Heart right ventricle (tissue), 16 donors: ENCODE measurements at regions of chr2 and their contacts with region 1.

Region 1: DNA sequence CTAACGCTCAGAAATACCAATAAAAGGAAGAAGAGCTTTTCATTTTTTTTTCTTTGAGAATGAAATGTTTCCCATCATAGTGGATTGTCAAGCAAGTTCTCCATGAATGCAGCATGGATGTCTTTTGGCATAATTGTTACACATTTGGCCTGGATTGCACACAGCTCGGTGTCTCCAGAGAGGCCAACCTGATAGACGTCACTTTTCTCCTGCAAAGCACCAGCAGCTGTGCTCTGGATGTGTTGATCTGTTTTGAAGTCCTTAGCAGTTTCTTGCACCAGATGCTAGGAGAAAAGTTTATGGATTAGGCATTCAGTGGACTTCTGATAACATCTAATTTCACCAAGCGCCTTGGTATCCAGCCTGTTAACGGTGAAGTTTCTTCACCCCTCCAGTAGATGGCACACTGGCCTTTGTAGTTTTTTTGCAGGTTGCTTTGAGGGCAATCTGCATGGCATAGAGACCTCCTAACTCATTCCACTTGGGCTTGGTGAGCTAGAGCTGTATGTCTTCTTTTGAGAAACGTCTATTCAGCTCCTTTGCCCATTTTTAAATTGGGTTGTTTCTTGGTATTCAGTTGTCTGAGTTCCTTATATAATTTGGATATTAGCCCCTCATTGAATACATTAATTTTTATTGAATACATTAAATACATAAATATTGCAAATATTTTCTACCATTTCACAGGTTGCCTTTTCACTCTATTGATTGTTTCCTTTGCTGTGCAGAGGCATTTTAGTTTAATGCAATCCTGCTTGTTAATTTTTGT is 59.7 kb downstream of the PTH2R start:
- DNase-seq: no peak
- ATAC-seq: no peak
- H3K4me3 ChIP-seq: no peak overlapping the region
- H3K27ac ChIP-seq: no peak overlapping the region
- H3K4me1 ChIP-seq: no peaks in the 10 kb centered on the region
- H3K27me3 ChIP-seq: peaks cover 0 to 4% (median 0%) of the 10 kb centered on the region in 7 donors
- CTCF ChIP-seq: peak in 8 of 9 donors; percentile 17 to 67 (median 54)

Region 2: GRCh38 chr2:208489687-208490086 is 23.4 kb after region 1 on chr2:
- intact Hi-C with region 1: no loop called
- DNase-seq: no peak
- ATAC-seq: no peak
- H3K4me3 ChIP-seq: no peak overlapping the region
- H3K27ac ChIP-seq: no peak overlapping the region
- H3K4me1 ChIP-seq: no peaks in the 10 kb centered on the region
- H3K27me3 ChIP-seq: no peaks in the 10 kb centered on the region
- CTCF ChIP-seq: no peak

Region 3: GRCh38 chr2:208783187-208783586 is 316.9 kb after region 1 on chr2:
- intact Hi-C with region 1: loop called in 1 of 10 experiments (anchors 10 kb)
- DNase-seq: no peak
- ATAC-seq: no peak
- H3K4me3 ChIP-seq: no peak overlapping the region
- H3K27ac ChIP-seq: no peak overlapping the region
- H3K4me1 ChIP-seq: no peaks in the 10 kb centered on the region
- H3K27me3 ChIP-seq: no peaks in the 10 kb centered on the region
- CTCF ChIP-seq: peak in 4 of 9 donors; percentile 11 to 48 (median 20)

Region 4: DNA sequence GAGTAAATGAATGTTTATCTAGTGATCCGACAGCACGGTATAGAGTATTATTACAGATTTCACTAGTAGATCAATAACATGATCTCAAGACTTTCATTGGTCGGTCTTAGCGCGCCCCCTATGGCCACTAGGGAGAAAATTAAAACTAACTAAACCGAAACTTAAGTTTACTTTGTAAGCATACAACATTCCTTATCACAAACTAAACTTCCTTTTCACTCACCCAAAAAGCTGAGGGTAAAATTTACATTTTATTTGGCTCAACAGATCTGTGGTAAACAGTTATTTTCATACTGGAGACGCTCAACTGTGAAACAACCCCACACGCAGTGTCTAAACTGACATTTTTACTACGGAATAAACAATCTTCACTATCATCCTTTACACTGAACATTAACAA is 741.9 kb after region 1 on chr2:
- intact Hi-C with region 1: loop called in 1 of 10 experiments (anchors 5 kb)
- DNase-seq: peak in 1 of 2 donors; percentile 9
- ATAC-seq: no peak
- H3K4me3 ChIP-seq: peak overlapping the region in 2 of 10 donors; percentile 6 to 28
- H3K27ac ChIP-seq: no peak overlapping the region
- H3K4me1 ChIP-seq: no peaks in the 10 kb centered on the region
- H3K27me3 ChIP-seq: no peaks in the 10 kb centered on the region
- CTCF ChIP-seq: peak in 8 of 9 donors; percentile 21 to 67 (median 46)